Vagina (tissue), 2 donors: ENCODE measurements at regions of chr11 and their contacts with region 1.

Region 1: DNA sequence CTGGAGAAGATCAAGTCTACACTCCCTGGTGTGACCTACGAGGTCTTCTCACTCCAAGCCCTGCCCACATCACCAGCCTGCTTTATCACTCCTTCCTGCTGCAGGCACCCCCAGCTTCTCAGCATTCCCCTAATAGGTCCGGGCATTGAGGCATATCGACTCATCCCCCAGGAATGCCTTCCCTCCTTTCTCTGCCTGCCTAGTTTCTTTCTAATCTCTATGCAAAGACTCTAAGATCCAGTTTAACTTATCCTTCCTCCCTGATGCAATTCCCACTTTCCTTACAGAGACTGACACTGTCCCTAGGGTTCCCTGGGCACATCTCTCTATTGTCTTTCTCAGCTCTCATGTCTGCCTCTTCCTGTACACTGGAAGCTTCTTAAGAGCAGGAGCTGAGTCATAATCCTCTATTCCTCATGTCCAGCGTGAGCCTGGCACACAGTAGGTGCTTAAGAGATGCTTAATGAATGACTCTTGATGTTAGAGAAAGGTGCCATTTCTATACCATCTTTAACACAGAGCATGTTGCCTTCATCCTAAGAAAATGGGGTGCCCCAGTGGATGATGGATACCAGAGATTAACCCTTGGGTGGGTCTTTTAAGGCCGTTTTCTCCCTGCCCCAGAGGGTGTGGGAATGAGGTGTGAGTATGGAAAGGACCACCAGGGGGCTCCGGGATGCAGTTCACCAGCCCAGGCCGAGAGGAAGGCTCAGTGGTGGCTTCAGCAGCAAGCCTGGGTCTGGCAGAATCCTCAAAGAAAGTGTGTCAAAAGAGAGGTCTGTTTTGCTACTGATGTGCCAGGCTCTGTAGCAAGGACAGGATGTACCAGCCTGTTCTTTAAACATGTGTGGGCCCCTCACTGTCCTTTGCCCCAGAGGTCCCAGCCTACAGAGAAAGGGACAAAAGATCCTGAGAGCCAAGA is 34.7 kb downstream of the PARVA start:
- DNase-seq: no peak
- H3K4me3 ChIP-seq: no peak overlapping the region
- H3K27ac ChIP-seq: peak overlapping the region; percentile 86
- H3K4me1 ChIP-seq: peaks cover 70% of the 10 kb centered on the region
- H3K27me3 ChIP-seq: no peaks in the 10 kb centered on the region
- CTCF ChIP-seq: peak; percentile 45 to 83 (median 45)
- POLR2A ChIP-seq: no peak

Region 2: GRCh38 chr11:12122083-12122482 is 290.0 kb before region 1 on chr11:
- intact Hi-C with region 1: loop called (anchors 5 kb)
- DNase-seq: no peak
- H3K4me3 ChIP-seq: no peak overlapping the region
- H3K27ac ChIP-seq: no peak overlapping the region
- H3K4me1 ChIP-seq: peaks cover 16% of the 10 kb centered on the region
- H3K27me3 ChIP-seq: no peaks in the 10 kb centered on the region
- CTCF ChIP-seq: no peak
- POLR2A ChIP-seq: no peak

Region 3: DNA sequence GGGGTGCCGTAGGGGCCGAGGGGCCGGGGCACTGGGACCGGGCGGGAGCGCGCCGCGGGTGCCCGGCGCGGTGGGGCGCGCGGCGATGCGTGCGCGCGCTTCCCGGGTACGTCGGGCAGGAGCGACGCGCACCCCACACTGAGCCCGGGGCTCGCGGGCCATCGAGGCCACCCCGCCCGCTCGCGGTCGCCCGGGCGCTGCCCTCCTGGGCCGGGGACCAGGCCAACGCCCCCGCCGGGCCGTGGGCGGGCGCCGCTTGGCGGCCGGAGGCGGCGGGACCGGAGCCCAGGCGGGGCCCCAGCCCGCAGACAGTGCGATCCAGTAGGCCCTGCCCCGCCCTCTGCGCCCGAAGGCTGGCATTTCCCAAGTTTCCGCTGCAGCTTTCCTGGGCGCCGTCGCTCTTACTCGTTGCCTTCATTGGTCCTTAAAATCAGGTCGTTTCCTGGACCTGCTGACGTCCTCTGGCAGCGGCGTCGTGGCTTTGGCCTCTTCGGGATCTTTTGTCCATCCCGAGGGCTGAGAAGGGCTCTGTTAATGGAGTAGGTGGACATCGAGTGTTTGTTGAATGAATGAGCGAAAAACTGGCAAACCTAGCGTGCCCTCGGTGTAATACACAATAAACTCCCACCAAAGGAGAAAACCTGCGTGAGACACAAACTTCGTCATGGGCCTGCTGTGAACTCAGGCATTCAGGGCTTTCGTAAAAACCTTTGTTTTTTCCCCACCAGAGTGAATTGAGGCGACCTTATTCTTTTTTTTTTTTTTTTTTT is 34.1 kb before region 1 on chr11:
- intact Hi-C with region 1: loop called (anchors 5 kb)
- DNase-seq: no peak
- H3K4me3 ChIP-seq: peak overlapping the region; percentile 60 to 87
- H3K27ac ChIP-seq: peak overlapping the region; percentile 93
- H3K4me1 ChIP-seq: peaks cover 32% of the 10 kb centered on the region
- H3K27me3 ChIP-seq: no peaks in the 10 kb centered on the region
- CTCF ChIP-seq: peak in 1 of 3 experiments; percentile 19
- POLR2A ChIP-seq: no peak

Region 4: DNA sequence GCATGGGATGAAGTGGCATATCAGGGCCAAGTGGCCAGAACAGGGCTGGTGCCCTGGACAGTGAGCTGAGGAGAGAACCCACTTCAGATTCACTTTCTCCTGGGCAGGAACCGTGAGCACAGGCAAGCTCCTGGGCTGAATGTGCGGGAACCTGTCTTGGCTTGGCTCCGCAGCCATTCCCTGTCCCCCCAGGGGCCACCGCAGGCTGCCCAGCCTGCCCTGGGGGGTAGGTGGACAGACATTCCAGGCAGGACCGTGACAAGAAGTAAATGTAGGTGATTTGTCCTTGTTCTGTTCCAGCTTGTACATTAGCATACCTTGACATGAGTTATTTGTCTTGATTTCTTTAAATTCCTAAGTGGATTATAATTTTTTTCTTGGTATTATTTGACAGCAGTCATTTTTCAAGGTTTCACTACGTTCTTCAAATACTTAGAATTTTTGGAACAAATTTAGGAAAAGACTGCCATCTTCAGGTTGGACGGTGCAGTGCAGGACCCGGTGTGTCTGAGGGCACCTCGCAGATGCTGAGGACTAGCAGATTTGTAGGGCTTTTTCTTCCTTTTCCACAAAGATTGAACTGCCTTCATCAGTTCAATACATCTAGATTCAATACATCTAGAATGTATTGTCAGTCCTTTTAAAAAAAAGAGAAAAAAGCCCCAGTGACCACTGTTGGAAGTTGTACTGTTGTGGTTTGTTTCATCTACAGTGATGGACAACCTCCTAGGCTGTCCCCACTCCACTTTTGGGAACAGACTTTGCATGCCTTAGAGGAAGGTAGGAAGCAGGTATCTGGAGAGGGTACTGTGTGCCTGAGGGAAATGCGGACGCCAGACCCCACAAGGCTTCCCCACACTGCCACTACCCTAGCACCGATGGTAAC is 482.0 kb after region 1 on chr11:
- intact Hi-C with region 1: loop called (anchors 10 kb)
- DNase-seq: no peak
- H3K4me3 ChIP-seq: no peak overlapping the region
- H3K27ac ChIP-seq: no peak overlapping the region
- H3K4me1 ChIP-seq: peaks cover 11% of the 10 kb centered on the region
- H3K27me3 ChIP-seq: no peaks in the 10 kb centered on the region
- CTCF ChIP-seq: peak; percentile 73 to 89 (median 84)
- POLR2A ChIP-seq: no peak